Activated B cell treated with CpG ODN at 0.5 μM for 24 hours (primary cell): ENCODE measurements at regions of chr14 and their contacts with region 1.

Region 1: DNA sequence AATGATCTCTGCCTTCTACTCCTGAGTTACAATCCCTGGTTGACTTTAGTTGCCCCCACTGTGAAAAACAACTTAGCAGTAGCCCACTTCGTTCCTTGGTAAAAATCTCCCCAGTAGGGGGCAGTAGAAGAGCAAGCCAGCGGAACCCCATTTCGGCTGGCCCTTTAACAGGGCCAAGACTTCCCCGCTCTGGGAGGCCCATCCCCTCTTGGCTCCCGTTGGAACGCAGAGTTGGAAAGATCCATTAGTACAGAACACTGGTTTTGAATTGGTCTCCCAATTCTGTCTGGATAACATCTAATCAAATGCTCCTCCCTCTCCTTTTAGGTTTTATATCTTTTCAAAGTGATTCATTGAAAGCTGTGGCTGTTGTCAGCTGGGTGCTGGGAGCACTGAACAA is 1133.3 kb downstream of the BCL11B start:
- DNase-seq: no peak
- ATAC-seq: no peak
- H3K4me3 Mint-ChIP-seq: no peak overlapping the region
- H3K27ac Mint-ChIP-seq: no peak overlapping the region
- H3K4me1 Mint-ChIP-seq: no peaks in the 10 kb centered on the region
- H3K27me3 Mint-ChIP-seq: no peaks in the 10 kb centered on the region
- CTCF ChIP-seq: no peak

Region 2: DNA sequence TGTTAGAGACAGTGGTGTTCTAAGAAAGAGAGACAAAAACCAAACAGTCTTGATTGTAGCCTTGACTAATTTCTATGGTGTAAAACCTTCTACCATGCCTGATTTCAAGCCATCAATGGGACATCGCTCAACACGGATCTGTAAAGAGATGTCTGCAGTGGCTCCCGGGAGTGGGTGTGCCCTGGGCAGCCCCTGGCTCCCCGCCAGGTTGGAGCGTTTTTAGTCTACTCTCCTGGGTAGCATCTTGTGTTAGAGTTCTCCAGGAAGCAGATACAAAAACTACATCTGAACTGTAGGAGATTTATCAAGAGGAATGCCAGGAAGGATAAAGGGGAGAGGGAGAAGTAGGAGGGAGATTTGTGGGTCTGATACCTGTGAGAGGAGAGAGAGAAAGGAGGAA is 79.6 kb before region 1 on chr14:
- CTCF ChIA-PET with region 1: no interaction called
- POLR2A ChIA-PET with region 1: no interaction called
- intact Hi-C with region 1: no loop called
- DNase-seq: no peak
- ATAC-seq: no peak
- H3K4me3 Mint-ChIP-seq: no peak overlapping the region
- H3K27ac Mint-ChIP-seq: no peak overlapping the region
- H3K4me1 Mint-ChIP-seq: no peaks in the 10 kb centered on the region
- H3K27me3 Mint-ChIP-seq: no peaks in the 10 kb centered on the region
- CTCF ChIP-seq: no peak

Region 3: DNA sequence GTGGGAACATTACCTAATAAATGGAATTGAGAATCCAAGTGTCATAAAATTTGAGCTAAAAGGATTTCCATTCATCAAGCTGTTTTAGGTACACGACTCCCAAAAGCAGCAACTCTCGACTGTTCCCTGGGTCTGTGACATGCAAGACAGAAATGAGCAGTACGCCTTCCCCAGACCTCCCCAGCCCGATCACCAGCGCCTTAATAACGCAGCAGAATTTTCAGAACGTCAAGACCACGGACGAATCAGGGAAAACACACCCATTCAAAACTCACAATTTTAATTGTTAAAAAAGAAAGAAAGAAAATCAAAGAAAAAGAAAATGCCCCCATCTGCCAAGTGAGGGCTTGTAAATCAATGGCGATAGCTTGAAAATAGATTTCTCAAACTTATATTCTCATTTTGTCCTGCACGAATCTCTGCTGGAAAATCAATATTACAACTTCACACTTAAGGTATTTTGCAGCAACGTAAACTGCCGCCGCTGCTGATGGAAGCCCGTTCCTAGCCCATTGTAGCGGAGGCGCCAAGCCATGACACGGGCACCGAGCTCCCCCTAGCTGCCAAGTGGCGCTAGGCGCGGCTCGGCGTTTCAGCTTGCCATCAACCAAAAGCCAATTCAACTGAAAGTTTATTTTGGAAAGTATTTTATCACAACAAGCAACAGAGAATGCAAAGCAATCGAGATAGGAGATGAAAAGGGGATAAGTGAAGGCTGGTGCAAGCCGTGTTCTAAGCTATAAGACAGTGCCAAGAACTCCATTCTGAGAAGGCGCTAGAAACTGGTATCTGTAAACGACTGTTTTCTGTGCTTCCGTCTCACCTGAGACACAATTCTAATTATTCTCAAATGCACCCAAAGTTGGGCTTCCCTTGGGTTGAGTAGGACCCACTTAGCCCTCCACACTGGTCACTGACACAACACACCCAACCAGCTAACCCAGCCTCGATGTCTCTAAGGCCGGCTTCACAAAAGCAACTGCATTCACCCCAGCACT is 1127.8 kb after region 1 on chr14:
- CTCF ChIA-PET with region 1: no interaction called
- POLR2A ChIA-PET with region 1: no interaction called
- intact Hi-C with region 1: loop called (anchors 5 kb)
- DNase-seq: no peak
- ATAC-seq: peak; percentile 28
- H3K4me3 Mint-ChIP-seq: no peak overlapping the region
- H3K27ac Mint-ChIP-seq: no peak overlapping the region
- H3K4me1 Mint-ChIP-seq: peaks cover 17% of the 10 kb centered on the region
- H3K27me3 Mint-ChIP-seq: peaks cover 75% of the 10 kb centered on the region
- CTCF ChIP-seq: no peak